ENCODE measurements at regions of chr1 and their contacts with region 1.

Region 1: GRCh38 chr1:110645821-110646735 is 28.7 kb downstream of the KCNA3 start:
- DNase-seq: no peak
- CTCF ChIP-seq: no peak

Region 2: DNA sequence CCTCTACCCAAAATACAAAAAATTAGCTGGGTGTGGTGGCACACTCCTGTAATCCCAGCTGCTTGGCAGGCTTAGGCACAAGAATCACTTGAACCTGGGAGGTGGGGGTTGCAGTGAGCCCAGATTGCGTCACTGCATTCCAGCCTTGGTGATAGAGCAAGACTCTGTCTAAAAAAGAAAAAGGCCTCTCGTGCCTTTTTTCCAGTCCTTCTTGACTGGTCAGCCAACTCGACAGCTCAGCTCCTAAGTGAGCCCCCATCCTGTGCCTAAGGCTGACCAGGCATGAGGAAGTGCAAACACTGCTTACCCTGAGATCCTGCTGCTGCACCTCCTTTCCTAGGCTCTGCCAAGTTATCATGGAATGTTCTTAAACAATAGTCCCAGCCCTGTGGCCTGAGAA is 205.2 kb before region 1 on chr1:
- CTCF ChIA-PET with region 1: no interaction called
- POLR2A ChIA-PET with region 1: no interaction called
- DNase-seq: no peak
- CTCF ChIP-seq: no peak

Region 3: GRCh38 chr1:110495926-110496600 is 150.0 kb before region 1 on chr1:
- CTCF ChIA-PET with region 1: no interaction called
- POLR2A ChIA-PET with region 1: no interaction called
- DNase-seq: peak; percentile 83
- CTCF ChIP-seq: peak; percentile 94

Region 4: DNA sequence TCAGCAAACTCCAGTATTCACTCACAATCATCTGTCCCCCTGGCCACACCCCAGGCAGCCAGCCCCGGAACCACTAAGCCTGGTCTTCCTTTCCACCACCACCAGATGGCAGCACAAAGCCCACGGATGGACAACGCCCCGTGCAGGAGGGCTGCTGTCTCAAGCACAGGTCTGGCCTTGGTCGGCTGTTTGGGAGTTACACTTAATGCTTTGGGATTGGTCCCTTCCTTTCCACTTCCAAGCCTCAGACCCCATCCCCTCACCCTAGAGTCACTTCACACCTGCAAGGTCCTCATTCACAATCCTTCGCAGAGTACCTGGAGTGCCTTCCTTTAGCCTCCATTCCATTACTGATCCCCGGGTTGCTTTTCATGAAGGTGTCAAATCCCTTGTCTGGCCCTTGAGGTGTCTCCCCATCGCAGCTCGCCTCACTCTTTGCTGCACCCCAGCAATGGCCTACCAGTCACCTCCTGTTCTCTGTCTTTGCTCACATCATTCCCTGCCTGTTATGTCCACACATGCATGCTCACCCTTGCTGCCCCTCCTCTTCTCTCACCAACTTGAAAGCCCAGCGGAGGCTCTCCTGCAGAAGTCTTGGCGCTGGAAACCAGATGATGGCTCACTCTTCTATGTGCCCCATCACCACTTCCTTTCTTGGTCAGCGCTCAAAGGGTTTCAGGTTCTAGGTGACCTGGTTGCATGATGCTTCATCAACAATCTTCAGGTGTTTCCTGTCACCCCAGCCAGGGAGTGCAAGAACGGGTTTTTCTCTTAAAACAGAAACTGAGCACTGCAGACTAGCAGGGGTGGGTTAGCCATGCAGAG is 15.0 kb before region 1 on chr1:
- CTCF ChIA-PET with region 1: interaction called, 25 read pairs
- POLR2A ChIA-PET with region 1: no interaction called
- DNase-seq: peak; percentile 67
- CTCF ChIP-seq: peak; percentile 75

Measured in GM10248 (cell line).